OCI-LY7 (cell line): ENCODE measurements at regions of chr1 and their contacts with region 1.

Region 1: DNA sequence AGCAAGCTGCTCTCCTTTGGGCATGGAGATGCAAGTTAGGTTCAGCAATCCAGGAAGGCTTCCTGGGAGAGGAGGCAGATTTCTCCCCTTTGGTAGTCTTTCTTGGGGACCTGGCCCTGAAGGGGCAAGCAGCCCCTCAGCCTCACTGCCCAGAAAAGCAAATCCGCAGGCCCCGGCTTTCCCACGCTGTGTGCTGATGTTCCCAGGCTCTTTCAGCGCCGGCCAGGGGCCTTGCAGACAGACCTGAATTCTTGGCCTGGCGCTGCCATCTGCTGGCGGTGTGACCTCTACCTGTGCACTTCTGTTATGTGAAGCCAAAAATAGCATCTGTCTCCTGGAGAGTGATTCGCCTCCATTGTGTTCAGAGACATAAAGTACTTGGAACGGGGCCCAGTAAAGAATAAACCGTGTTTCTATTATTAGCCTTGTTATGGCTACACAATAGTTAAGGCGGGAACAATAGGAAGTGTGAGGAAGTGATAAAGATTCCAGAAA is 64.8 kb downstream of the ALPL start:
- DNase-seq: peak; percentile 67
- H3K4me3 ChIP-seq: no peak overlapping the region
- H3K27ac ChIP-seq: no peak overlapping the region
- H3K4me1 ChIP-seq: no peaks in the 10 kb centered on the region
- CTCF ChIP-seq: peak; percentile 81

Region 2: GRCh38 chr1:21232044-21232443 is 342.0 kb before region 1 on chr1:
- CTCF ChIA-PET with region 1: no interaction called
- POLR2A ChIA-PET with region 1: no interaction called
- intact Hi-C with region 1: loop called (anchors 10 kb)
- DNase-seq: peak; percentile 45
- H3K4me3 ChIP-seq: no peak overlapping the region
- H3K27ac ChIP-seq: no peak overlapping the region
- H3K4me1 ChIP-seq: no peaks in the 10 kb centered on the region
- CTCF ChIP-seq: peak; percentile 94

Region 3: DNA sequence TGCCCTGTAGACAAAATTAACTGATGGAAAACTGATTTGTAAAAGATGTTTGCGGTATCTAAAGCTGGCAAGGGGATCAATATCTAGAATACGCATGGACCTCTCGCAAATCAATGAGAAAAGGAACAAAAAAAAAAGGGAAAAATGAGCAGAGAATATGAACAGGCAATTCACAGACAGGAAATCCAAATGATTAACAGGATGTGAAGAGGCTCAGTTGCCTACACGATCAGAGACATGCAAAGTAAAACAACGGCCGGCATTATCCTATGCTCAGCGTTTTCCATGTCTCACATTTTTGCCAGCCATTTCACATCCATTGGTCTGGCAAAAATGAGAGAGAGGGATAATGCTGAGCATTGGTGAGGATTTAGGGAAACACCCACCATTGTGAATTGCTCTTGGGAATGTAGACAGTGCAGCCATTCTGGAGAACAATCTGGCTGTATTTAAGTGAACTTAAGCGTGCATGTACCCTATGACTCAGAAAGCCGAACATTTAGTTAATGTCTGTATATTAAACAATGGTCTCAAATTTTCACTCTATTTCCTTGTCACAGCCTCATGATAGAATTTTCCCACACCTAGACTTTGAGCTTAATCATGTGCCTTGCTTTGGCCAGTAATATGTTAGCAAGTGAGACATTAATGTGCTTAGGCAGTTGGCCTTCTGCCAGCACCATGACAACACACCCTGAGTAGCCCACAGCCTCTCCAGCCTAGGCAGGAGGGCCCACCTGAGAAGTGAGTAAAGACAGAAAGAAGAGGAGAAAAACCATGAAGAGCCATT is 195.1 kb before region 1 on chr1:
- CTCF ChIA-PET with region 1: no interaction called
- POLR2A ChIA-PET with region 1: no interaction called
- intact Hi-C with region 1: loop called (anchors 10 kb)
- DNase-seq: no peak
- H3K4me3 ChIP-seq: no peak overlapping the region
- H3K27ac ChIP-seq: no peak overlapping the region
- H3K4me1 ChIP-seq: peaks cover 4% of the 10 kb centered on the region
- CTCF ChIP-seq: no peak

Region 4: GRCh38 chr1:21508580-21509350 is 65.3 kb before region 1 on chr1:
- CTCF ChIA-PET with region 1: no interaction called
- POLR2A ChIA-PET with region 1: no interaction called
- intact Hi-C with region 1: loop called (anchors 10 kb)
- DNase-seq: peak; percentile 57
- H3K4me3 ChIP-seq: no peak overlapping the region
- H3K27ac ChIP-seq: no peak overlapping the region
- H3K4me1 ChIP-seq: peaks cover 8% of the 10 kb centered on the region
- CTCF ChIP-seq: peak; percentile 50

Region 5: GRCh38 chr1:21631944-21632887 is 58.2 kb after region 1 on chr1:
- CTCF ChIA-PET with region 1: no interaction called
- POLR2A ChIA-PET with region 1: no interaction called
- intact Hi-C with region 1: no loop called
- DNase-seq: no peak
- H3K4me3 ChIP-seq: no peak overlapping the region
- H3K27ac ChIP-seq: no peak overlapping the region
- H3K4me1 ChIP-seq: no peaks in the 10 kb centered on the region
- CTCF ChIP-seq: no peak